ENCODE measurements at regions of chr22 and their contacts with region 1.

Region 1: DNA sequence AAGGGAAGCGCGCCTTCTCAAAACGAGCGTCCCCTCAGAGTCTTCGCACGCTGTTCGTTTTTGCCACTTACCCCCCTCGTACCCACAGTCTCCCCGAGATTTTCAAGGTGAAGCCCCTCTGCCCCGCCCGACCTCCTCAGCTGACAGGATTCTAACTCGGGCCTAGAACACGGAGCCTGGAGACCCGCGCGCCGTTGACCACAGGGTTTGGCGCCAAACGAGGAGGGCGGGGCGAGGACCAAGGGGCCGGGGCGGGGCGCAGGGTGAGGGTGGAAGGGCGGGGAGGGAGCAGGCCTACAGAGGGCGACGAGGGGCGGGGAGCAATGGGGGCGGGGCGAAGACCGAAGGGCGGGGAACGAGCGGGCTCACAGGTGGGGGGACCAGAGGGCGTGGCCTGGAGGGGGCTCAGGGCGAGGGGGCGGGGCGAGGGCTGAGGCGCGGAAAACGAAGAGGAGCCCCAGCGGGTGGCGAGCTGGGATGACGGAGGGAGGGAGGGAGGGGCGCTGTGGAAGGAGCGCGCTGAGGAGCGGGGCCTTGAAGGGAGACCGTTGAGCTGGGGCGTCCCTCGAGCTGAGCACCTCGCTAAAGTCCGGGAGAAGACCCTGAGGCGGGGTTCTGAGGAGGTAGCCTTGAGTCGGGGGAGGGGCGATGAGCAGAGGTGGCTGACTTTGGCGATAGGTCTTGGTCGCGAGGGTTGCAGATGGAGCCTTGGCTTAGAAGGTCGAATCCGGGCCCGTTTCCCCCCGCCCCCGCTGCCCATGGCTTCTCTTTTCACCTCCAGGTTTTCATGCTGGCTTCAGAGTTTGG is at the start of gene DMC1:
- DNase-seq: no peak
- ATAC-seq: peak; percentile 92
- H3K4me3 ChIP-seq: peak within 1 kb of the TSS; percentile 60 to 83
- H3K27ac ChIP-seq: peak within 1 kb of the TSS; percentile 81
- H3K4me1 ChIP-seq: peaks cover 3% of the 10 kb centered on the region; the same call in 1 of the 2 replicates
- H3K27me3 ChIP-seq: no peaks in the 10 kb centered on the region
- CTCF ChIP-seq: no peak
- total RNA-seq, gene DMC1: 3.2 TPM

Region 2: DNA sequence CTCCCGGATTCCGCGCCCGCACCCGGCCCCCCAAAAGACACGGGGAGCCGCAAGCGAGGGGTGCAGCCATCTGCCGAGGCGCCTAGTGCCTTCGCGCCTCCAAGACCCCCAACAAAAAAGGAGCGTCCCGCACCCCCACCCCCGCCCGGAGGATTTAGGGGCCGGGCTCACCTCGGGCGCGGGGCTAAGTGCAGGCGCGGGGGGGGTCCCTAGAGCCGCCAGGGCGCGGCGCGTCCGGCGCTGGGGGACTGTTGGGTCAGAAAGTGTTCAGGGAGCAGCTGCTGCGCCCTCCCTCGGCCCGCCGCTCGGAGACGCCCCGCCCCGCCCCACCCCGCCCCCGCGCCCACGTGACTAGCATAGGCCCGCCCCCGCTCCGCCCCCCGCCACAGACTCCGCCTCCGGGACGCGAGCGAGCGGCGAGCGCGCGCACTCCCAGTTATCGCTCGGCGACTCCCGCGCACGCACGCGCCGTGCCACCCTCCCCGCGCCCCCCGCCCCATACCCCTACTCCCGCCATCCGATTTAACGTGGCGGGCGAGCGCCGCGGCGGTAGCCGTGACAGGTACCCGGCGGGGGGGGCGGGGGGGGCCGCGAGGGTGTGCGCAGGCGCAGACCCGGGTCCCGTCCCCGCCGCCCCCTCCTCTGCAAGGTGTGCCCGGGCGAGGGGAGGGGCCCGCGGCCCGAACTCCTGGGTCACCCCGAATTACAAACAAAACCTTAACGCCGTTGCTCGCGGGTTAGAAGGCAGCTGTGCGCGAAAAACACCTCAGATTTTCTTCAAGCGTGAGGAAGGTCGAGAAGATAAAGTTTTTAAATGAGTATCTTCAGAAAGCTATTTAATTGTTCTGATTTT is 171.3 kb before region 1 on chr22:
- CTCF ChIA-PET with region 1: interaction called, 3 read pairs
- POLR2A ChIA-PET with region 1: no interaction called
- in situ Hi-C with region 1: no loop called
- intact Hi-C with region 1: loop called (anchors 10 kb)
- DNase-seq: no peak
- ATAC-seq: peak; percentile 86
- H3K4me3 ChIP-seq: peak overlapping the region; percentile 61 to 66
- H3K27ac ChIP-seq: peak overlapping the region; percentile 69
- H3K4me1 ChIP-seq: peaks cover 8% of the 10 kb centered on the region
- H3K27me3 ChIP-seq: no peaks in the 10 kb centered on the region
- CTCF ChIP-seq: no peak

Region 3: DNA sequence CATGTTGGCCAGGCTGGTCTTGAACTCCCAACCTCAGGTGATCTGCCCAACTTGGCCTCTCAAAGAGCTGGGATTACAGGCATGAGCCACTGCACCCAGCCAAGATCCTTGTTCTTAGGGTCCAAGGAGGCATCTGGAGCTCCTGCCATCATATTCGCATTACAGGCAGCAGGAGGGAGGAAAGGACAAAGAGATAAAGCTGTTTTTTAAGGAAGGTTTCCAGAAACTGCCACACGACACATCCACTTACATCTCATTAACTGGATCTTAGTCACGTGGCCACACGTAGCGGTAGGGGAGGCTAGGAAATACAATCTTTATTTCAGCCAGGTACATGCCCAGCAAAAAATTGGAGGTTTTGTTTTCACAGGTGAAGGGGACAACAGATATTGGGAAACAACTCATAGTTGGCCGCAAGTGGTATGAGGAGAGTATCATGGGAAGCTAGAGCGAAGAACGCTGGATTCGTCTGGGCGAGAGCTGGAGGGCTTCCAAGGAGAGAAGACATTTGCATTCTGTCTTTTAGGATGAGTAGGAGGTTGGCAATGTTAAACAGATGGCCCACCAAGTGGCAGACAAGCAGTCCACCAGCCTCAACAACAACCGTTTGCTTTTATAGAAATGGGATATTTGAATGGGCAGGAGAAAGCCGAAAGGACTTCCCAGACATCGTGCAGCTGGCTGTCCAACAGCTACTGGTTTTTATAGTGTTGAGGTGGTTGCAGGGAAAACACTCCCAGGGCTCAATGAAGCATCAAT is 39.0 kb after region 1 on chr22:
- CTCF ChIA-PET with region 1: interaction called, 10 read pairs
- POLR2A ChIA-PET with region 1: no interaction called
- in situ Hi-C with region 1: no loop called
- intact Hi-C with region 1: no loop called
- DNase-seq: no peak
- ATAC-seq: no peak
- H3K4me3 ChIP-seq: no peak overlapping the region
- H3K27ac ChIP-seq: no peak overlapping the region
- H3K4me1 ChIP-seq: peaks cover 9% of the 10 kb centered on the region
- H3K27me3 ChIP-seq: no peaks in the 10 kb centered on the region
- CTCF ChIP-seq: no peak

Measured in Panc1 (cell line).